Sciatic nerve (tissue), 2 donors: ENCODE measurements at regions of chr1 and their contacts with region 1.

Region 1: GRCh38 chr1:161192476-161193465 is 6.1 kb downstream of the ADAMTS4 start:
- DNase-seq: peak; percentile 82
- ATAC-seq: peak; percentile 70

Region 2: GRCh38 chr1:161389691-161390558 is 197.2 kb after region 1 on chr1:
- intact Hi-C with region 1: loop called (anchors 10 kb)
- DNase-seq: peak; percentile 100
- ATAC-seq: peak; percentile 97